Natural killer cell (primary cell): ENCODE measurements at regions of chr9 and their contacts with region 1.

Region 1: GRCh38 chr9:136267261-136268111 is 21.9 kb upstream of the QSOX2 start:
- DNase-seq: peak; percentile 69 to 93
- ATAC-seq: peak; percentile 96 to 98 (median 98)
- H3K4me3 ChIP-seq: peak overlapping the region; percentile 53
- H3K4me3 Mint-ChIP-seq: peak overlapping the region; percentile 79
- H3K27ac ChIP-seq: peak overlapping the region; percentile 51
- H3K27ac Mint-ChIP-seq: peak overlapping the region; percentile 31 to 70
- H3K4me1 ChIP-seq: peaks cover 13% of the 10 kb centered on the region
- H3K4me1 Mint-ChIP-seq: peaks cover 0 to 8% of the 10 kb centered on the region in 2 donors
- H3K27me3 ChIP-seq: no peaks in the 10 kb centered on the region
- H3K27me3 Mint-ChIP-seq: no peaks in the 10 kb centered on the region
- CTCF ChIP-seq: no peak

Region 2: DNA sequence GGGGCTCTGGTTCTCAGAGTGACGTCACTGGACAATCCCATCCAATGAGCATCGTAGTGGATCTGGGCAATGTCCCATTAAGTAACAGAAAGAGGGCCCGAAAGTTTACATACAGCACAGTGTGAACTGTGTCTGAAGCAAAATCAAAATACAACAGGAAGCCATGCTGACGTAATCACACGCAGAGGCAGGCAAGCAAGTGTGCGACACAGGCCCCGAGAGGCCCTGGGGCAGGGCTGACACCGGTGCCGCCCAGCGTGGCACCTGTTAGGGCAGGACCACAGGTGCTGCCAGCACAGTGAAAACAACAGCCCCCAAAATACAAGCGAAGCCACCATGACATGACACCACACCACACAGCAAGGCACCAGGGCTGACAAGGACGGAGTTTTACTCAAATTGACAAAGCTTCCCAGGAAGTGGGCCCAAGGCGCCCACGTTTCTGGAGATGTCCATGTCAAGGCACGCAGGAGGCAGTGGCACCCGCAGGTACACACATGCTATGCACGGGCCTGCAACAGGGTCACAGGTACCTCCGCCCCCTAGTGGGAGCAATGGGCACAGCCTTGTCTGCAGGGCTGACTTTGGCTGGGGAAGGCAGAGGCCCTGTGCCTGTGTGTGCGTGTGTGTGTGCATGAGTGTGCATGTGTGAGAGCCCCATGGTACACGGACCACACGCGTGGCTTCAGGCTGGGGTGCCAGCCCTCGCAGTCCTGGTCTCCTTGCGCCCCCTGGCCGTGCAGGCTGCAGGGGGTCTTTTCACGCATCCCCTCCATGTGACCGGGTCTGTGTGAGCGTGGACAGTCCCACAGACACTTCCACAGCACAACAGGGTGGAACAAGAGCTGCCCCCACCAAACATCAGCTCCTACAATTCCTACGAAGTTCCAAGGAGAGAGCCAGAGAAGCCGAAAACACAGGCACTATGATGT is 41.5 kb before region 1 on chr9:
- intact Hi-C with region 1: no loop called
- DNase-seq: peak; percentile 39 to 80
- ATAC-seq: peak; percentile 75 to 88 (median 79)
- H3K4me3 ChIP-seq: no peak overlapping the region
- H3K4me3 Mint-ChIP-seq: peak overlapping the region; percentile 18
- H3K27ac ChIP-seq: peak overlapping the region; percentile 87
- H3K27ac Mint-ChIP-seq: peak overlapping the region; percentile 47 to 78
- H3K4me1 ChIP-seq: peaks cover 27% of the 10 kb centered on the region
- H3K4me1 Mint-ChIP-seq: peaks cover 17 to 20% of the 10 kb centered on the region in 2 donors
- H3K27me3 ChIP-seq: no peaks in the 10 kb centered on the region
- H3K27me3 Mint-ChIP-seq: no peaks in the 10 kb centered on the region
- CTCF ChIP-seq: peak; percentile 74

Region 3: DNA sequence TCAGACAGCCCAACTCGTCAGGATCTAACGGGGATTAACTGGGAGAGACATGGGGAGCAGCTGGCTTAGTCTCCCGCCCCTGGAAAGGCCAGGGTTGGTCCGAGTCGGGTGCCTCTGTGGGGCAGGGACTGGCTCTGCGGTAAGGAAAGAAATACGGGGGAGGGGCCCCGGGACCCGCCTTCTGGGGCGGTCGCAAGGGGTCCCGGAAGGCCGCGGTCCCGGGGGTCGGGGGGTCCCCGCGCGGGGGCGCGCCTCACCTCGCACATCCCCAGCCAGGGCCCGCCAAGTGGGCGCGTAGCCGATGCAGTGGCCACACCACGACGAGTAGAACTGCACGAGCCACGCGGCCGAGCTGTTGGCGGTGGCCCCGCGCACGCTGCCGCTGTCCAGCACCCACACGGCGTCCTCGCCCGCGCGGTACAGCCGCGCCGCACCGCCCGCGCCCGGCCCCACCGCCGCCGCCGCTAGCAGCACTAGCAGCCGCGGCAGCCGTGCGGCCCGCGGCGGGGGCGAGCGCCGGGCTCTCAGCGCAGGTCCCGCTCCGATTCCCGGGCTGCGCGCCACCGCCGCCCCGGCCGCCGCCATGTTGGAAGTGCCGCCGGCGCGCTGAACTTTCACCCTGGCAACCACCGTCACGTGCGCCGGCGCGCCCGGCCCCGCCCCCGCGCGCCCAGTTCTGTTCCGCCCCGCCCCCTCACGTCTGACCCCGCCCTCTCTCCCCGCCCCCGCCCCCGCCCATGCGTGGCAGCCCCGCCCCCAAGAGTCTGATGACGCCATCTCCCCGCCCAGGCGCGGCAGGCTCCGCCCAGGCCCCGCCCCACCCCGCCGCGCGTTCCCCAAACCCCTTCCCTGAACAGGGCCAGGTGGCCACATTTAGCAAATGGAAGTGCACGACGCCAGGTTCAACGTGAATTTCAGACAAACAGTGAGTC is 22.0 kb before region 1 on chr9 and contains the start of gene QSOX2:
- intact Hi-C with region 1: loop called (anchors 2 kb)
- DNase-seq: peak; percentile 81 to 92
- ATAC-seq: peak; percentile 85 to 93 (median 88)
- H3K4me3 ChIP-seq: peak within 1 kb of the TSS; percentile 38
- H3K4me3 Mint-ChIP-seq: peak within 1 kb of the TSS; percentile 97
- H3K27ac ChIP-seq: peak within 1 kb of the TSS; percentile 59
- H3K27ac Mint-ChIP-seq: peak within 1 kb of the TSS; percentile 85
- H3K4me1 ChIP-seq: peaks cover 50% of the 10 kb centered on the region
- H3K4me1 Mint-ChIP-seq: peaks cover 30 to 38% of the 10 kb centered on the region in 2 donors
- H3K27me3 ChIP-seq: no peaks in the 10 kb centered on the region
- H3K27me3 Mint-ChIP-seq: no peaks in the 10 kb centered on the region
- CTCF ChIP-seq: no peak
- total RNA-seq, gene QSOX2: 10.8 to 16.7 (median 16.6) TPM